Left ventricle myocardium inferior (tissue), 1 donor: ENCODE measurements at regions of chr6 and their contacts with region 1.

Region 1: GRCh38 chr6:108947114-108947854 is 99.1 kb downstream of the ARMC2 start:
- DNase-seq: no peak
- H3K4me3 ChIP-seq: peak overlapping the region; percentile 37
- H3K27ac ChIP-seq: peak overlapping the region; percentile 93
- H3K4me1 ChIP-seq: peaks cover 68% of the 10 kb centered on the region
- H3K27me3 ChIP-seq: no peaks in the 10 kb centered on the region
- CTCF ChIP-seq: no peak

Region 2: GRCh38 chr6:109009236-109009961 is 62.1 kb after region 1 on chr6:
- intact Hi-C with region 1: loop called (anchors 10 kb)
- DNase-seq: peak; percentile 98
- H3K4me3 ChIP-seq: peak overlapping the region; percentile 88
- H3K27ac ChIP-seq: peak overlapping the region; percentile 97
- H3K4me1 ChIP-seq: peaks cover 76% of the 10 kb centered on the region
- H3K27me3 ChIP-seq: no peaks in the 10 kb centered on the region
- CTCF ChIP-seq: peak; percentile 59